Calu3 (cell line): ENCODE measurements at regions of chr12 and their contacts with region 1.

Region 1: DNA sequence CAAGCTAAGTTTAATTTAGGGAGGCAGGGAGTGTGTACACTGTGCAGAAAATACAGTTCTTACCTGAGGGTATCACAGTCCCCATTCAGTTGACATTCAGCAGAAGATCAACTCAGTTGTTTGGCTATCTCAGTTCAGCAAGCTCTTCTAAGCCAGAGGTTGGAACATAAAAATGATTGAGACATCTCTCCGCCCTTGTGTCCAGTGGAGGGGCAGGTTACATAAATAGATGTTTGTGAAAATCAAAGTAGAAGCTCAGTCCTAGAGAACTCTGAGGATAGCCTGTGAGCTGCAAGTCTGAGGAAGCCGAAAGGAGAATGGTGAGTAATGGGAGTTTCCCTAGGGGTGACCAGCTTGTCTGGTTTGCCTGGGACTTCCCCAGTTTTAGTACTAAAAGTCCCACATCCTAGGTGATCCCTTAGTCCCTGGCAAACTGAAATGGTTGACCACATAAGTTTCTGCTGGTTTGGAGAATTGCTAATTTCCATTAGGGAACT is 251.4 kb upstream of the ATP2B1 start:
- DNase-seq: peak; percentile 67
- H3K4me3 Mint-ChIP-seq: no peak overlapping the region
- H3K27ac Mint-ChIP-seq: peak overlapping the region; percentile 49
- H3K4me1 Mint-ChIP-seq: peaks cover 43% of the 10 kb centered on the region
- H3K27me3 Mint-ChIP-seq: no peaks in the 10 kb centered on the region
- CTCF ChIP-seq: no peak

Region 2: GRCh38 chr12:89663577-89664357 is 296.3 kb before region 1 on chr12:
- CTCF ChIA-PET with region 1: no interaction called
- intact Hi-C with region 1: no loop called
- DNase-seq: no peak
- H3K4me3 Mint-ChIP-seq: no peak overlapping the region
- H3K27ac Mint-ChIP-seq: peak overlapping the region; percentile 15
- H3K4me1 Mint-ChIP-seq: peaks cover 39% of the 10 kb centered on the region
- H3K27me3 Mint-ChIP-seq: no peaks in the 10 kb centered on the region
- CTCF ChIP-seq: no peak

Region 3: GRCh38 chr12:89762498-89763188 is 197.4 kb before region 1 on chr12:
- CTCF ChIA-PET with region 1: interaction called, 6 read pairs
- intact Hi-C with region 1: loop called (anchors 5 kb)
- DNase-seq: no peak
- H3K4me3 Mint-ChIP-seq: no peak overlapping the region
- H3K27ac Mint-ChIP-seq: peak overlapping the region; percentile 81
- H3K4me1 Mint-ChIP-seq: peaks cover 18% of the 10 kb centered on the region
- H3K27me3 Mint-ChIP-seq: no peaks in the 10 kb centered on the region
- CTCF ChIP-seq: no peak

Region 4: DNA sequence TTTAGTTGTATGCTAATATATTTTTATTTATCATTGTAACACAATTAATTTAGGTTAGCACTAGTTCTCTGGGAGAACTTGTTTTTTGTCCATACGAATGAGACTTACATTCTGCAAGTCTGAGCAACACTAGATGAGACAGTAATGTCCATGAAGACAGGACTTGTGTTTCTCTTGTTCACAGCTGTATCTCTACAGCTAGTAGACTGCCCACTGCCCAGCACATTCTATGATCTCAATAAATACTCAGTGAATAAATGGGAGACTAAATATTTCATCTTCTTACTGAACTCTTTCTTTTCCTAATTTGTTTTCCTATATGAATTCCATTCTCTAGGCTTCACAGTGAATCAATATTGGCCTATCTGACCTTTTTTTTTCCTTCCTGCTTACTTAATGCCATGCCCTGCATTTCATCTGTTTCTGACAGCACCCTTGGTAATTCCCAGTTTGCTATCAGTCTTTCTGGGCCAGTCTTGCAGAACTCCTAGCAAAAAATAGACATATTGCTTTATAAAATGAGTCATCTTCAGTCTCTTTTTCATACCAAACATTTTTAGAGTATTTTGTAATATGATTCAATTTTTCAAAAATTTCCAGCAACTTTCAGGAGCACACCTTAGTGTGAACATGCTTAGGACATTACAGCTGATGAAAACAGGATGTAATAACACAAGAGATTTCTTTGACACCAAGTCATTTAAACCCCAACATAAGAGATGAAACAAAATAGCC is 65.9 kb before region 1 on chr12:
- CTCF ChIA-PET with region 1: no interaction called
- intact Hi-C with region 1: loop called (anchors 5 kb)
- DNase-seq: no peak
- H3K4me3 Mint-ChIP-seq: peak overlapping the region; percentile 9
- H3K27ac Mint-ChIP-seq: peak overlapping the region; percentile 83
- H3K4me1 Mint-ChIP-seq: peaks cover 70% of the 10 kb centered on the region
- H3K27me3 Mint-ChIP-seq: no peaks in the 10 kb centered on the region
- CTCF ChIP-seq: no peak